ENCODE measurements at regions of chr14 and their contacts with region 1.

Region 1: DNA sequence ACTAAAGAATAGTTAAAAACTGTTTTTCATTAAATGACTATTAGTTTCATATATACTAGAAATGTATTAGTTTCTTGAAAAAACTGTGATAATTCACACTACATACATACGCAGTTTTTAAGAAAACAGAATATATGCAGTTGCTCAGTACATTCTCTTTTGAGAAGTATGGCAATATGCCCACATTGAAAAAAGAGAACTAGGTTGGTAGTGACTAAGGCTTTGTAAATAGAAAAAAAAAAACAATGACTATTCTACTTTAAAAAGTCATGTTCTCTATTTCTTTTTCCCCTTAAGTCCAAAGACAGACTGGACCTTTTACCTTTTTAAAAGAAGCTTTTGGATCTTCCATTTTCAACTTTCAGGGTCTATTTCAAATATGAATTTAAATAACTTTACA is 25.0 kb downstream of the SNX6 start:
- DNase-seq: no peak
- ATAC-seq: no peak

Region 2: DNA sequence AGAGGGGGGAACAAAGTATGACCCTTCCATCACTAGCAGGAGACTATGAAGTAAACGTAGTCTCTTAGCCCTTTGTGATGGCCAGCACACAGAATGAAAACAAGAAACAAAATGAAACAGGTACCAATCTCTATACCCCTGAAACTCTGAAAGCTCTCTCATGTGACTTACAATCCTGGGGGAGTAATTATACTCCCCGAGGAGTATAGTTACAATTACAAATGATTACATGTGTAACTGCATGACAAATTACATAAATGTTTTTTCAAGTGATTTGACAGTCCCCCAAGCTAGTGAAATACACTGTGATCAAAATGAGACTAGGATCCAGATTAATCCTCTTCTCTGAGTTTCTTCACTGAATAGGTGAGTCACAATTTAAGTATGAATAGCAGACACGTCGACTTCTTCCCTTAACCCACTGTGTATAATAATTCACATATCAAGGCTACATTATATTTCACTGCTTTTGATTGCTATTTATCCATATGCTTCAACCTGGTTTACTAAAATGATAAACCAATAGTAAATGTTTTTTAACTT is 216.9 kb before region 1 on chr14:
- intact Hi-C with region 1: no loop called
- DNase-seq: no peak
- ATAC-seq: no peak

Region 3: GRCh38 chr14:34568803-34569202 is 36.2 kb before region 1 on chr14:
- intact Hi-C with region 1: loop called (anchors 5 kb)
- DNase-seq: no peak
- ATAC-seq: no peak

Measured in left ventricle myocardium superior (tissue), 1 donor.